ENCODE measurements at regions of chr2 and their contacts with region 1.

Region 1: DNA sequence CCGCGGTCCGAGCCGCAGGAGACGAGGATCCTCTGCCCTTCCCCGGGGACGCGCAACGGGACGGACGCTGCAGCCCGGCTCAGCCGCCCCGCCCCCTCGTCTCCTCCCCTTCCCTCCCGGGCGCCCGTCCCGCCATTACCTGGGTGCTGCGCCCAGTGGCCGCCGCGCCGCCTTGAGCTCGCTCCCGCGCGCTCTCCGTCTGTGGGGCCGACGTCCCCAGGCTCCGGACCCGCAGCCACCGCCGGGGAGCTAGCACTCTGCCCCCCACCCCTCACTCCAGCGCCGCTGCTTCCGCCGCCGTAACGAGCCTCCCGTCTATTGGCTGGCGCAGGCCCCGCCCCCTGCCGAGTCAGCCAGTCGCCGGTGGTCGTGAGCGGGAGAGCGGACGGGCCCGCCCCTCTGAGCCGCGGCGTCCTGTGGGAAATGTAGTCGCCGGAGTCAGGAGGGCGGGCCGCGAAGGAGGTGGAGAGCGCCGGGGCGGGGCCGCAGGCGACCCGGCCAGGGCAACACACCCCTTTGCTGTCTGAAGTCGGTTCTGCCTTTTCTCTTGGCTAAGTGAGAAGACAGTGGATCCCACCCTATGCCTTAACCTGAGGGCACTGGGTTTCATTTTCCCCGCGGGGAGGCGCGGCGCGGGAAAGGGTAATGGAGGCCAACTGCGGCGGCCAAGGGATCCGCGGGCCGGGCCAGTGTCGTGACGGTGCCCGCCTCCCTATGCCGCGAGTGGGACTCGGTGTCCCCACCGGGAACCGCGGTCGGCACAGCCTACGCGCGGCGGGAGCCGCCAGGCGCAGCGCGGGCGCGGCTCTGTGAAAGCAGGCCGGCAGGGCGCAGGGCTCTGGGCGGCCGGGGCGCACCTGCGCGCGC is at the start of gene SAP130:
- DNase-seq: peak; percentile 96
- H3K4me3 ChIP-seq: peak within 1 kb of the TSS; percentile 89 to 96 (median 91)
- H3K27ac ChIP-seq: peak within 1 kb of the TSS; percentile 67
- H3K4me1 ChIP-seq: peaks cover 6% of the 10 kb centered on the region
- H3K27me3 ChIP-seq: no peaks in the 10 kb centered on the region
- CTCF ChIP-seq: no peak
- POLR2A ChIP-seq: no peak
- total RNA-seq, gene SAP130: 30.4 and 34.3 TPM in 2 replicates

Region 2: DNA sequence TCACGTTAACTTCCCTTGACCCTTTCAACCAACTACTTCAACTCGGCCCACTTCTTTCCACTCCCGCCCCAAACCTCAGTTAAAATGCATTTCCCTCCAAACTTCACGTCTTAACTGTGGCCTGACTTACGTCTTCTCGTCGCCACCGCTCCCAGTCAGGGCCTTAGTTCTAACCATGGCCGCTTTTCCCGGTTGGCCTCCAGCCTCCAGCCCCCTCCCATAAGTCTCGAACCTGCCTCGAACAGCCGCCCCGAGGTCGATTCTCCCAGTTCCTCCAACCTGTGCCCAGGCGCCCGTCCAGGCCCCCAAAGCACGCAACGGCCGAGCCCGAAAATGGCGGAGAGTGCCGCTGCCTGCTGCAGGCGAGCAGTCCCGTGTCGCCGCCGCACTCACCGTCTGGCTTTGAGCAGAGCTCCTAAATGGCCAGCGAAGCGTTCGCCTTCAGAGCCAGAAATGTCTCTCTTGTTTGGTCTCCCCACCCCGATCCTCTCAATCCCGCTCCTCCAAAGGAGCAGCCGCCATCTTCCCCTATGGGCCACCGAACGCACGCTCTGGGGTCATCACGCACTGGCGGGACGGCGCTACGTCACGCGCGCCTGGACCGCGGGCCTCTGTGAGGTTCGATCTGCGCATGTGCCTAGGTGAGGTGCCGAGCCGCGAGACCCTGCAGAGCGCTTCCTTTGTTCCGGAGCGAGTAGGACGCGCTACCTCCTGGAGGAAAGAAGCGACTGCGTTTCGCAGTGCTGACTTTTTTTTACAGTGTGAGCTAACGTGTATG is 217.2 kb before region 1 on chr2 and contains the start of gene WDR33:
- CTCF ChIA-PET with region 1: no interaction called
- POLR2A ChIA-PET with region 1: no interaction called
- dilution Hi-C with region 1: no loop called
- intact Hi-C with region 1: loop called (anchors 2 kb)
- DNase-seq: peak; percentile 91
- H3K4me3 ChIP-seq: peak within 1 kb of the TSS; percentile 50 to 100 (median 97)
- H3K27ac ChIP-seq: peak within 1 kb of the TSS; percentile 83
- H3K4me1 ChIP-seq: peaks cover 10% of the 10 kb centered on the region
- H3K27me3 ChIP-seq: no peaks in the 10 kb centered on the region
- CTCF ChIP-seq: no peak
- POLR2A ChIP-seq: peak; percentile 86
- total RNA-seq, gene WDR33: 52.5 and 54.7 TPM in 2 replicates

Region 3: DNA sequence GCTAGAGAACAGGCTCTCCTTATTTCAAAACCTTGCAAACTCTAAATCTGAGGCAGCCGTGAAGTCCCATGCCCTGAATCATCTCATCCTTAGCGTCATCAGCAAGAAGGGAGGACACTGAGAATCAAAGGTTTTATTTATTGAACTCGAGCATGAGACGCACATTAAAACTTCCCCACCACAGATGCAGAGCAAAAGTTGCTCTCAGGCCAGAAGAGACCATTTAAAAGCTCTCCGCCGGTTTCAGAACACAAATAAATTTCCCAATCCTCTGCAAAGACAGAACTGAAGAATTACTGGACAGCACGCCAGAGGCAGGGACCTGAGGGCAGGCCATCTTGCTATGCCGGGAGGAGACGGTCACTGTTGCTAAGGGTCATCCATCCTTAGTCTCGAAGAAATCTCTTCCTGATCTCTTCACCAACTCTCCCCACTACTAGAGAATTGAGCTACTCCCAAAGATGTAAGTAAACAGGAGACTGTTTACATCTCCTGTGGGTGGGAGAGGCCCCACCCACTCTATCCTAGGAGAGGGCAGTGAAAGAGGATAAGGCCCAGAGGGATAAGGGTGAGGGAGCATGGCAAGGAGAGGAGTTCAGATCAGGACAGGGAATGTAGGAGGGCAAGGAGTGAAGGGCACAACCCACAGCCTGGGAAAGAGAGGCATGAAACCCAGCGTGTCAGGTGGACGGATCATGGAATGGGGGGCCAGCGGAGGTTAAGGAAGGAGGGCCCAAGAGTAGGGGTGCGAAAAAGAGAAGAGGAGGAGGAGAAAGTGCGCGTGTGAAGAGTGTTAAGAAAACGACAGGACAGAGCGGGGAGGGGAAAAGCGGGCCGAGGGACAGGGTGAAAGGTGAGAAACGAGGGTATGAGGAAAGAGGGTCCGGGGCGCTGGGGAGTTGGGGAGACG is 143.3 kb before region 1 on chr2:
- CTCF ChIA-PET with region 1: no interaction called
- POLR2A ChIA-PET with region 1: no interaction called
- dilution Hi-C with region 1: no loop called
- intact Hi-C with region 1: loop called (anchors 5 kb)
- DNase-seq: peak; percentile 24
- H3K4me3 ChIP-seq: peak overlapping the region; percentile 12 to 77 (median 53)
- H3K27ac ChIP-seq: peak overlapping the region; percentile 25
- H3K4me1 ChIP-seq: peaks cover 19% of the 10 kb centered on the region
- H3K27me3 ChIP-seq: no peaks in the 10 kb centered on the region
- CTCF ChIP-seq: no peak
- POLR2A ChIP-seq: no peak

Region 4: GRCh38 chr2:128154225-128154624 is 126.2 kb after region 1 on chr2:
- CTCF ChIA-PET with region 1: no interaction called
- POLR2A ChIA-PET with region 1: no interaction called
- dilution Hi-C with region 1: no loop called
- intact Hi-C with region 1: no loop called
- DNase-seq: no peak
- H3K4me3 ChIP-seq: no peak overlapping the region
- H3K27ac ChIP-seq: no peak overlapping the region
- H3K4me1 ChIP-seq: no peaks in the 10 kb centered on the region
- H3K27me3 ChIP-seq: no peaks in the 10 kb centered on the region
- CTCF ChIP-seq: no peak
- POLR2A ChIP-seq: no peak

Region 5: GRCh38 chr2:128169497-128169896 is 141.5 kb after region 1 on chr2:
- CTCF ChIA-PET with region 1: no interaction called
- POLR2A ChIA-PET with region 1: no interaction called
- dilution Hi-C with region 1: no loop called
- intact Hi-C with region 1: loop called (anchors 5 kb)
- DNase-seq: peak; percentile 91
- H3K4me3 ChIP-seq: no peak overlapping the region
- H3K27ac ChIP-seq: peak overlapping the region; percentile 89
- H3K4me1 ChIP-seq: peaks cover 31% of the 10 kb centered on the region
- H3K27me3 ChIP-seq: no peaks in the 10 kb centered on the region
- CTCF ChIP-seq: no peak
- POLR2A ChIP-seq: peak; percentile 52

Region 6: DNA sequence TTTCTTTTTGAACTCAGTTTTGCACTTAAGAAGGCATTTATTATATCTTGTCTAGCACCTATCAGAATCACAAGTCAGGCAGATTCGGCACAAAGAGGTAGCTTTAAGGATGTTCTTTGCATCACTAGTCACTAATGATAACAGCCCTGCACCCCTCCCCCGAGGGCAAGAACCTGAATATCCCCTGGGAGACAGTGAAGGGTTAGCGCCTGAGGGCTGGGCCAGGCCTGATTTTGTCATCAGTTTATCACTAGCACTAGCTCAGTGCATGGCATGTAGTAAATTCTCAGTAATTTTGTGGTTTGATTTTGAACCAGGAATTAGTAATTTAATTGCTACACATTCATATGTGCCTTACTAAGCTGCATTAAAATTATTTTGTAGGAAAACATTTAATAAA is 314.5 kb after region 1 on chr2:
- CTCF ChIA-PET with region 1: no interaction called
- POLR2A ChIA-PET with region 1: no interaction called
- dilution Hi-C with region 1: no loop called
- intact Hi-C with region 1: no loop called
- DNase-seq: no peak
- H3K4me3 ChIP-seq: no peak overlapping the region
- H3K27ac ChIP-seq: no peak overlapping the region
- H3K4me1 ChIP-seq: no peaks in the 10 kb centered on the region
- H3K27me3 ChIP-seq: no peaks in the 10 kb centered on the region
- CTCF ChIP-seq: no peak
- POLR2A ChIP-seq: no peak